Activated CD8-positive, alpha-beta memory T cell treated with anti-CD3 and anti-CD28 coated beads, Interleukin-2, amount 10 ng/mL, durations not matched to agents 7 days and 5 days (primary cell): ENCODE measurements at regions of chr1 and their contacts with region 1.

Region 1: DNA sequence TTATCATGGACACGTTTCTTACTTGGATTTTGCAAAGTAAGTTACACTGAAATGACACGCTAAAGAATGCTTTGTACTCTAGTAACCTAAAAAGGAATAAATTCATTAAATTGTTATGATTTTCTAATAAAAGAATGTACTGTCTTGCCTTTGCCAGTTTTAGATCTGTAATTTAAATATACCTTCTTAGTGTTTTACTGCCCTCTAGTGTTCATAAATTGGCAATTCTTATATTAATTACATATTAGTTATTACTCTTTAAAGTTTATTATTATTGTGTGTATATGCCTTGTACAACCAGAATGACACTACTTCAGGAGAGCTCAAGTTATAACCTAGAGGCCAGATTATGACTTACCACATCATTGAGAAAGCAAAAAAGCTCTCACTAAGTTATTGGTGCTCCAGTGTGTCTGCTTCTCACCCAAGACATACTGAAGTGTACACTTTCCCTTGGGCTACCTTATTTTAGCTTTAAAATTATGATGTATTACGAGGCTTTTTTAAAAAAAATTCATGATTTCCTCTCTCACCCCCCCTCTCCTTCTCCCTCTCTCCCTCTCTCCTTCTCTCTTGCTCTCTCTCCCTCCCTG is 169.9 kb downstream of the HS2ST1 start:
- DNase-seq: no peak
- ATAC-seq: no peak
- H3K4me3 Mint-ChIP-seq: no peak overlapping the region
- H3K27ac Mint-ChIP-seq: no peak overlapping the region
- H3K4me1 Mint-ChIP-seq: peaks cover 6% of the 10 kb centered on the region
- H3K27me3 Mint-ChIP-seq: no peaks in the 10 kb centered on the region

Region 2: GRCh38 chr1:86833461-86834215 is 250.7 kb before region 1 on chr1:
- CTCF ChIA-PET with region 1: interaction called, 41 read pairs
- DNase-seq: peak; percentile 65
- ATAC-seq: peak; percentile 74
- H3K4me3 Mint-ChIP-seq: no peak overlapping the region
- H3K27ac Mint-ChIP-seq: no peak overlapping the region
- H3K4me1 Mint-ChIP-seq: peaks cover 2% of the 10 kb centered on the region
- H3K27me3 Mint-ChIP-seq: peaks cover 2% of the 10 kb centered on the region

Region 3: DNA sequence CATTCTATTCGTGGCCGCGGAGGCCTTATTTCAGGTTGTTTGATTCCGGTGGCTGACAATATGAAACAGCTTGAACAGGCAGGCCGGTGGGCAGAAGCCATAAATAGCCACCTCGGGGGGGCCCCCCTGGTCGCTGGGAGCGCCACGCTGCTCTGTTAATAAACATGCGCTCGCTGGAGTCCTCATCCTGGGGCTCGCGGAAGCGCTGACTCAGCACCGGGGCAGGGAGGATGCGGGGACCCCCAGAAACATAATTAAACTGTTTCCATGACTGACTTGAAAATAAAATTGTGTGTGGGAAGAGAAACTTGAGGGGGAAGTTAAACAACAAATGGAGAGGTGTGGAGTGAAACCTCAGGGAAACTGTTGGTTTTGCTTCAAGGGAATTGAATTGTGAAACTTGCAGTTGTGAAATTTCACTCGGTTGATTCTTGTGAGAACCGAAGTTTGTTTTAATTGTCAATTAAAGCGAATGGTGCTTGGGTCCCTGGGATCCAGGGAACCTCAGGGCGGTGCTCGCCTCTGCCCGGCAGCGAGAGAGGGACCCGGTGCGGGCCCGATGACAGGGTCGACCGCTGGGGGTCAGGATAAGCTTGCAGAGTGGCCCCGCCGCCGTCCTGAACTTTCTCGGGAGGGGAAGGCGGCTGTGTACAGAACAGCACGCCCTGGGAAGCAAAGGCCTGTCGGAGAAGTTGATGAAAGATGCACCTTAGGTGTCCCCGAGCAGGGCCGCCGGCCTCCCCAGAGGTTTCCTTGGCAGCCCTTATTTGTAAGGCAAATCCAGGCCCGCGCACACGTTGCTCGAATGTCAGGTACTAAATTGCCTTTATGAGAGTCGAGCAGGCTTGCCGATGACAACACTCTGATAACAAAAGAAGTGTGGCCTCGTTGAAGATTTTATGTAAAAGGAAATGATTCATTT is 67.4 kb after region 1 on chr1:
- CTCF ChIA-PET with region 1: no interaction called
- DNase-seq: peak; percentile 52
- ATAC-seq: peak; percentile 91
- H3K4me3 Mint-ChIP-seq: peak overlapping the region; percentile 69
- H3K27ac Mint-ChIP-seq: no peak overlapping the region
- H3K4me1 Mint-ChIP-seq: peaks cover 9% of the 10 kb centered on the region
- H3K27me3 Mint-ChIP-seq: peaks cover 38% of the 10 kb centered on the region